Psoas muscle (tissue), 8 donors: ENCODE measurements at regions of chr1 and their contacts with region 1.

Region 1: GRCh38 chr1:212857992-212858460 is at the start of gene FLVCR1:
- DNase-seq: peak; percentile 98
- ATAC-seq: peak; percentile 100
- H3K4me3 ChIP-seq: peak within 1 kb of the TSS; percentile 88
- H3K27ac ChIP-seq: peak within 1 kb of the TSS; percentile 85
- H3K4me1 ChIP-seq: peaks cover 2% of the 10 kb centered on the region
- H3K27me3 ChIP-seq: no peaks in the 10 kb centered on the region
- CTCF ChIP-seq: no peak
- total RNA-seq, gene FLVCR1: 1.3 to 2.6 (median 1.6) TPM

Region 2: GRCh38 chr1:212738330-212738729 is 119.7 kb before region 1 on chr1:
- intact Hi-C with region 1: no loop called
- DNase-seq: no peak
- ATAC-seq: no peak
- H3K4me3 ChIP-seq: no peak overlapping the region
- H3K27ac ChIP-seq: no peak overlapping the region
- H3K4me1 ChIP-seq: no peaks in the 10 kb centered on the region
- H3K27me3 ChIP-seq: no peaks in the 10 kb centered on the region
- CTCF ChIP-seq: no peak

Region 3: GRCh38 chr1:212981571-212982328 is 123.7 kb after region 1 on chr1:
- intact Hi-C with region 1: loop called in 1 of 2 experiments (anchors 5 kb)
- DNase-seq: peak in 1 of 2 donors; percentile 61
- ATAC-seq: peak; percentile 18 to 68 (median 54)
- H3K4me3 ChIP-seq: no peak overlapping the region
- H3K27ac ChIP-seq: peak overlapping the region; percentile 86
- H3K4me1 ChIP-seq: peaks cover 45% of the 10 kb centered on the region
- H3K27me3 ChIP-seq: no peaks in the 10 kb centered on the region
- CTCF ChIP-seq: no peak